PC-3 (cell line): ENCODE measurements at regions of chr1 and their contacts with region 1.

Region 1: DNA sequence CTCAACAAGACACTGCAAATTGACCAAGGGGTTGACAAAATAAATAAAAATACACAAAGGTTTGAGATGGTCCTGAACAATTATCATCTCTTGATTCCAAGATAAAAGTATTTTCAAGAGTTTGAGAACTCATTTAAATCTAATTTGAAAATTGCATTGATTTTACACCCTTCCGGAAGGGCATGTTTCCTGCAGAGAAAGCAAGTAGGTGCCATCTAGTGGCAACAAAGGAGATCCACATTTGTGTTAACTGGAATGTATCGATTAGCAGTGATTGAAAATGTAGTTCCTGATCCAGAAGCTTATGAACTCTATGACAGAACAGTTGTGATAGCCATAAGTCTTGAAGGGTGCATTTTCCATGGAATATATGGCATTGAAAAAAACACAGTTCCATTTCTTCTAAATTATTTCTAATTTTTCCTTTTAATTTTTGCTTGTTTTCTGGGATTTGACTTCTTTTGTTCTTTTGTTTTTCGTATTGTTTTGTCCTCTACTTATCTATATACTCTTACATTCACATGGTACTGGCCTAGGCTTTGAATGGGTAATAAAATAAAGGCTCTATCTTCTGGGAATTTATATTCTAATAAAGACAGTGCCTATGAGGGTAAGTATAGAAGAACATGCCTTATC is 143.7 kb downstream of the DNM3 start:
- DNase-seq: peak; percentile 78
- ATAC-seq: peak; percentile 54
- H3K4me3 ChIP-seq: no peak overlapping the region
- H3K27ac ChIP-seq: no peak overlapping the region
- H3K4me1 ChIP-seq: no peaks in the 10 kb centered on the region
- H3K27me3 ChIP-seq: peaks cover 32% of the 10 kb centered on the region
- CTCF ChIP-seq: peak; percentile 99

Region 2: DNA sequence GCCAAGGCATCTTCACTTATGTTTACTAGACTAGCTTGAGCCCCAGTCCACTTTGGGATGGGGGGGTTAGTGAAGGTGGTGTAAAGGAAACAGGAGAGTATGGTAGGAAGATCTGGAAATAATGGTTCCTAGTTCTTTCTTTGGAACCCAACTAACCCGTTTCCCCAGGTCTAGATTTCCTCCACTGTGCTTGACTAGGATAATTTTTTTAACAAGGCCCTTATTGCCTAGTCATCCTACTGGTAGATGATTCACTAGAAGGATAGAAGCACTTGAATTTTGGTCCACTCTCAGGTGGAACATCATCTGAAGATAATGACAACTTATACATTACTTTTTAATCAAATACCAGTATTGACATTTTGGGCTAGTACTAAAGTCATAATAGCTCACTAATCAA is 408.8 kb before region 1 on chr1:
- CTCF ChIA-PET with region 1: no interaction called
- POLR2A ChIA-PET with region 1: no interaction called
- intact Hi-C with region 1: no loop called
- DNase-seq: peak; percentile 74
- ATAC-seq: peak; percentile 58
- H3K4me3 ChIP-seq: no peak overlapping the region
- H3K27ac ChIP-seq: no peak overlapping the region
- H3K4me1 ChIP-seq: peaks cover 6% of the 10 kb centered on the region; the same call in 1 of the 2 replicates
- H3K27me3 ChIP-seq: no peaks in the 10 kb centered on the region
- CTCF ChIP-seq: no peak

Region 3: DNA sequence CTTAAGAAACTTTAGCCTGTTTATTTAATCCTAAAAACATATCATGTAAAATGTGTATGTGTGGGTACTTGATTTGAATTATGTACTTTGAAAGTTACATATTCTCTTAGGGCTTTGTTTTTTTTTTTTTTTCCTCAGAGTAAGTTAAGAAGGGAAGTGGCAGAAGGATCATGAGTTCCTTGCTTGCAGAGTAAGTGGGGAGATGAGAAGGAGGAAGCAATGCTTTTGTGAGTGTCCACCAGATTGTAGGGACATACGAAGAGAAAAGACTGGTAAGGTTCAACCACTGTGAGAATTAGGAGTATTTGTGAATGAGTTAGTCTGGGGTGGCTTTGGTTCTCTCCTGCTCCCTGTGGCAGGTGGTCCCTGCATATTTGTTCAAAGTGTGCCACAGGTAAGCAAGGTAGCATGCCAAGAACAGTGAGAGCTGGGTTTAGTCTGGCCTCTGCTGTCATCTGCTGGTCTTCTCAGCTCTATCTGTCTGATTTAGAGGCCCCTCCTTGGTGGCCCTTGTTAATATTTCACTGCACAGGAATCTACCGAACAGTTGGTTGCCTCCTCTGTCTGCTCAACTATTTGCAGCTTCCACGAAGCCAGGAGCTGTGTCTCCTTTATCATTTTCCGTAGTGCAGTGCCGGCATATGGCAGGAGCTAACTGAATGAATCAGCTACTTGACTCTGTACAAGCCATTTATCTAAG is 134.2 kb before region 1 on chr1:
- CTCF ChIA-PET with region 1: no interaction called
- POLR2A ChIA-PET with region 1: no interaction called
- intact Hi-C with region 1: loop called (anchors 5 kb)
- DNase-seq: peak; percentile 41
- ATAC-seq: peak; percentile 66
- H3K4me3 ChIP-seq: no peak overlapping the region
- H3K27ac ChIP-seq: no peak overlapping the region
- H3K4me1 ChIP-seq: no peaks in the 10 kb centered on the region
- H3K27me3 ChIP-seq: peaks cover 85% of the 10 kb centered on the region
- CTCF ChIP-seq: peak; percentile 47; the same call in 1 of the 2 replicates

Region 4: GRCh38 chr1:172254521-172255222 is 269.7 kb after region 1 on chr1:
- CTCF ChIA-PET with region 1: no interaction called
- POLR2A ChIA-PET with region 1: no interaction called
- intact Hi-C with region 1: no loop called
- DNase-seq: peak; percentile 98
- ATAC-seq: peak; percentile 96
- H3K4me3 ChIP-seq: peak overlapping the region; percentile 0; the same call in 1 of the 2 replicates
- H3K27ac ChIP-seq: peak overlapping the region; percentile 53
- H3K4me1 ChIP-seq: peaks cover 23% of the 10 kb centered on the region
- H3K27me3 ChIP-seq: no peaks in the 10 kb centered on the region
- CTCF ChIP-seq: no peak